CD4-positive, alpha-beta T cell (primary cell): ENCODE measurements at regions of chr5 and their contacts with region 1.

Region 1: DNA sequence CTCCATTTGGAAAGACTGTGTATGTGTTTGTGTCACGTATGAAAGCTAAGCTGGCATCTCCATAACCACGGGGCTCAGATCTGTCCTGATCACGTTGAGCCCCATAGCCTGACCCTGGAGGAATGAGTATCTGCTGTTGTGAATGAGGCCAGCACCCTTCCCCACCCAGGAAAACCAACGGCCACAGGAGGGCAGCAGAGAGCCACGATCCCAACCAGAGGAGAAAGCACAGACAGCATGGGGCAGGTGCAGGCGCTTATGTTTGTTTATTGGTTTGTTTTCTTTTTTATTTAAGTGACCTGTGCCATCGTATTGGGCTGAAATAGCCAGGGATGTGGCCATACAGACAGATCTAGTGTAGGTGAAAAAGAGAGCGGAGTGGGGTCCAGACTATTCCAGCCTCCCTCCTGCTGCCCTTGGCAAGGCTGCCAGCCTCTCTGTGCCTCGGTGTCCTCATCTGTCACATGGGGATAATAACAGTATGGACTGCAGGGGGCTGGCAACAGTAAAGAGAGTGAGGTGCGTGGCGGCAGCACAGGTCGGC is 12.0 kb downstream of the OR2V2 start:
- DNase-seq: peak; percentile 84 to 97 (median 92)
- ATAC-seq: peak; percentile 62
- H3K4me3 ChIP-seq: no peak overlapping the region
- H3K4me3 Mint-ChIP-seq: peak overlapping the region; percentile 92
- H3K27ac ChIP-seq: peak overlapping the region; percentile 91 to 98
- H3K27ac Mint-ChIP-seq: peak overlapping the region; percentile 98
- H3K4me1 ChIP-seq: peaks cover 26% of the 10 kb centered on the region
- H3K4me1 Mint-ChIP-seq: peaks cover 26% of the 10 kb centered on the region
- H3K27me3 ChIP-seq: peaks cover 2 to 3% of the 10 kb centered on the region in 2 experiments
- H3K27me3 Mint-ChIP-seq: peaks cover 16% of the 10 kb centered on the region
- CTCF ChIP-seq: peak; percentile 88

Region 2: DNA sequence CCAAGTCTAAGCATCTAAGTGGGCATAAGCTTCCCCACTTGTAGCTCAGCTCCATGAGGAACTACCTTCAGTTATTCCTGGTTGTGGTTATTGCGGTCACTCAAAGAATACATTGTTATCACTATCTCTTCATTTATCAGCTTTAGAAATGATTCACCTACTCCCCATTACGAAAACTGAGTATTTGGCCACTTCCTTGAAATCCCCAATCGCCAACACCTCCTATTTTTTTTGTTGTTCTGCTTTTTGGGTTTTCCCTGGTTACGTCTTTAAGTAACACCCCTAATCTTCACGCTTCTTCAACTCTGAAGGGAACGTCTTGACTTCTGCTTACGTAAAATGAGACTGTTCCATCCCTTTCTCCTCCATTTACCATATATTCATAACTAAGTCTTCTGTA is 888.1 kb before region 1 on chr5:
- CTCF ChIA-PET with region 1: no interaction called
- POLR2A ChIA-PET with region 1: no interaction called
- intact Hi-C with region 1: no loop called
- DNase-seq: no peak
- ATAC-seq: no peak
- H3K4me3 ChIP-seq: no peak overlapping the region
- H3K4me3 Mint-ChIP-seq: no peak overlapping the region
- H3K27ac ChIP-seq: no peak overlapping the region
- H3K27ac Mint-ChIP-seq: no peak overlapping the region
- H3K4me1 ChIP-seq: no peaks in the 10 kb centered on the region
- H3K4me1 Mint-ChIP-seq: no peaks in the 10 kb centered on the region
- H3K27me3 ChIP-seq: no peaks in the 10 kb centered on the region
- H3K27me3 Mint-ChIP-seq: no peaks in the 10 kb centered on the region
- CTCF ChIP-seq: no peak

Region 3: DNA sequence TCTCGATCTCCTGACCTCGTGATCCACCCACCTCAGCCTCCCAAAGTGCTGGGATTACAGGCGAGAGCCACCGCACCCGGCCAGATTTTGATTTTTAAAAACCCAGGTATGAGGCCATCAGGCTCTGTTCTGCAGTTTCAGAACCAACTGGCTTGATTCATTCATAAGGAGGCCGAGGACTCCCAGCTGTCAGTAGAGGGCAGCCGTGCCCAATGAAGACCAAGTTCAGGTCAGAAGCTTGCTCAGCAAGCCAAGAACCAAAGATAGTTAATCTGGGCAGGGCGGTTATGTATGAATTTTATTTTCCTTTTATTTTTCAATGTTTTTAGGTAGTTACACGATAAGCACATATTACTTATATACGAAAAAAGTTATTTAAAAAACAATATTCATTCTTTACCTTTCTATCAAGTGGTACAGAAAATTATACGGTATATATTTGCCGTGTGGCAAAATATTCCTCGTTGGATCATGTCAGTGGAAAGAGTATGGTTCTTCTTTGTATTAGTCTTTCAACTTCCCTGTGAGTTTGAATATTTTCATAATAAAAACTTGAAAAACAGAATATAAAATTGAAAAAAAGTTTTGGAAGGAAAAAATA is 374.8 kb before region 1 on chr5:
- CTCF ChIA-PET with region 1: no interaction called
- POLR2A ChIA-PET with region 1: no interaction called
- intact Hi-C with region 1: loop called (anchors 5 to 10 kb)
- DNase-seq: peak; percentile 59 to 86 (median 74)
- ATAC-seq: peak; percentile 90
- H3K4me3 ChIP-seq: no peak overlapping the region
- H3K4me3 Mint-ChIP-seq: no peak overlapping the region
- H3K27ac ChIP-seq: no peak overlapping the region
- H3K27ac Mint-ChIP-seq: peak overlapping the region; percentile 85
- H3K4me1 ChIP-seq: peaks cover 31% of the 10 kb centered on the region
- H3K4me1 Mint-ChIP-seq: peaks cover 45% of the 10 kb centered on the region
- H3K27me3 ChIP-seq: no peaks in the 10 kb centered on the region
- H3K27me3 Mint-ChIP-seq: no peaks in the 10 kb centered on the region
- CTCF ChIP-seq: peak; percentile 69

Region 4: DNA sequence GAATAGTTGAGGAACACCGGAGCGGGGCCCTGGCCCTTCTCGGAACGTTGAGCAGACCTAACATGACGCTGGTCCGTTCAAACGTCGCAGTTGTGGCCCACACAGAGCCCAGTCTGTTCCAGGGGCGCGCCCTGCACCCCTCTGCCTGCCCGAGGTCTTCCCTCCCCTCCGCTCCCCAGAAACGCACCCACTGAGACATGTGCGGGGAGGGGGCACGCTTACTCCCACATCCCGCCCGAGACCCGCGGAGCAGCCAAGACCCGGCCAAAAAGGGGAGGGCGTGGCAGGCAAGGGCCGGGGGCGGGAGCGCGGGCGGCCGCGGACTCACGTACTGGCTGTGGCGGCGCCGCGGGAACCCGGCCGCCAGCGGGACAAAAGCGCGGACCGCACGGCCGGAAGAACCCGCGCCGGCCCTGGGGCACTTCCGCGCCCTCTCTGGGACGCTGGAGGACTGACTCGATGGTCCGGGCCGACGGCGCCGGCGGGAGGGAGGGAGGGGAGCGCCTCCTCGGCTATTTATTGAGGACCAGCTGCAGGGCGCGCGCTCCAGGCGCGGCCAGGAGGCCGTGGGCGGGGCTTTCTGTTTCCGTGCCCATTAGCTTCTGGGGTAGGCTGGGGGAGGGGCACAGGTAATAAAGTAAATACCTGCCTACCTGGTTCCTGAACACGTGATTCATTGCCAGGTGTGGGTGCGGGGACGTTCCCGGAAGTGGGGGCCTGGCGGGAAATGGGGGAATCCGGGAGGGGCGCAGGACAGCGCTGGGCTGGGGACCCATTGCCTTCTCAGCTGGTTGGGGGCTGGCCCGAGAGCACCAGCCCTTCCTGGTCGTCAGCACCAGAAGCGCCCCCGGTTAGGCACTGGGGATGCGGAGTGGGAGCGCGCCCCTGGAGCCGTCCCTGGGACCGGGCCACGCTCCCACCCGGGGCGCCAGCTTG is 298.2 kb before region 1 on chr5 and contains the start of gene ZFP62:
- CTCF ChIA-PET with region 1: interaction called, 3 read pairs
- POLR2A ChIA-PET with region 1: no interaction called
- intact Hi-C with region 1: loop called in 1 of 2 experiments (anchors 5 kb)
- DNase-seq: peak; percentile 78 to 94 (median 85)
- ATAC-seq: peak; percentile 73
- H3K4me3 ChIP-seq: peak within 1 kb of the TSS; percentile 89
- H3K4me3 Mint-ChIP-seq: peak within 1 kb of the TSS; percentile 95
- H3K27ac ChIP-seq: peak within 1 kb of the TSS; percentile 85 to 88
- H3K27ac Mint-ChIP-seq: peak within 1 kb of the TSS; percentile 95
- H3K4me1 ChIP-seq: peaks cover 10% of the 10 kb centered on the region
- H3K4me1 Mint-ChIP-seq: peaks cover 27% of the 10 kb centered on the region
- H3K27me3 ChIP-seq: no peaks in the 10 kb centered on the region
- H3K27me3 Mint-ChIP-seq: peaks cover 5% of the 10 kb centered on the region
- CTCF ChIP-seq: peak; percentile 50
- total RNA-seq, gene ZFP62: 22.6 to 24.9 TPM

Region 5: GRCh38 chr5:181181650-181182565 is 22.6 kb after region 1 on chr5:
- CTCF ChIA-PET with region 1: interaction called, 4 read pairs
- POLR2A ChIA-PET with region 1: no interaction called
- intact Hi-C with region 1: loop called in 1 of 2 experiments (anchors 2 kb)
- DNase-seq: peak; percentile 46 to 88 (median 58)
- ATAC-seq: peak; percentile 59
- H3K4me3 ChIP-seq: no peak overlapping the region
- H3K4me3 Mint-ChIP-seq: peak overlapping the region; percentile 86
- H3K27ac ChIP-seq: no peak overlapping the region
- H3K27ac Mint-ChIP-seq: peak overlapping the region; percentile 86
- H3K4me1 ChIP-seq: peaks cover 30% of the 10 kb centered on the region
- H3K4me1 Mint-ChIP-seq: peaks cover 40% of the 10 kb centered on the region
- H3K27me3 ChIP-seq: no peaks in the 10 kb centered on the region
- H3K27me3 Mint-ChIP-seq: no peaks in the 10 kb centered on the region
- CTCF ChIP-seq: peak; percentile 87